GM12878 (cell line): ENCODE measurements at regions of chr16 and their contacts with region 1.

Region 1: GRCh38 chr16:17224879-17225281 is 245.9 kb downstream of the XYLT1 start:
- DNase-seq: no peak
- ATAC-seq: peak; percentile 72
- H3K4me3 ChIP-seq: no peak overlapping the region
- H3K27ac ChIP-seq: no peak overlapping the region
- H3K4me1 ChIP-seq: no peaks in the 10 kb centered on the region; the same call in 1 of the 2 replicates
- H3K27me3 ChIP-seq: no peaks in the 10 kb centered on the region
- CTCF ChIP-seq: no peak
- EP300 ChIP-seq: no peak
- POLR2A ChIP-seq: no peak
- RAD21 ChIP-seq: no peak

Region 2: GRCh38 chr16:17238284-17239028 is 13.6 kb after region 1 on chr16:
- CTCF ChIA-PET with region 1: interaction called, 4 read pairs
- POLR2A ChIA-PET with region 1: interaction called, 3 read pairs
- RAD21 ChIA-PET with region 1: interaction called, 7 read pairs
- SMC1A ChIA-PET with region 1: interaction called, 10 read pairs
- in situ Hi-C with region 1: no loop called
- intact Hi-C with region 1: no loop called
- DNase-seq: no peak
- ATAC-seq: peak; percentile 89
- H3K4me3 ChIP-seq: no peak overlapping the region
- H3K27ac ChIP-seq: no peak overlapping the region
- H3K4me1 ChIP-seq: peaks cover 14% of the 10 kb centered on the region
- H3K27me3 ChIP-seq: no peaks in the 10 kb centered on the region
- CTCF ChIP-seq: no peak
- EP300 ChIP-seq: no peak
- POLR2A ChIP-seq: no peak
- RAD21 ChIP-seq: no peak